HCT116 (cell line): ENCODE measurements at regions of chr14 and their contacts with region 1.

Region 1: DNA sequence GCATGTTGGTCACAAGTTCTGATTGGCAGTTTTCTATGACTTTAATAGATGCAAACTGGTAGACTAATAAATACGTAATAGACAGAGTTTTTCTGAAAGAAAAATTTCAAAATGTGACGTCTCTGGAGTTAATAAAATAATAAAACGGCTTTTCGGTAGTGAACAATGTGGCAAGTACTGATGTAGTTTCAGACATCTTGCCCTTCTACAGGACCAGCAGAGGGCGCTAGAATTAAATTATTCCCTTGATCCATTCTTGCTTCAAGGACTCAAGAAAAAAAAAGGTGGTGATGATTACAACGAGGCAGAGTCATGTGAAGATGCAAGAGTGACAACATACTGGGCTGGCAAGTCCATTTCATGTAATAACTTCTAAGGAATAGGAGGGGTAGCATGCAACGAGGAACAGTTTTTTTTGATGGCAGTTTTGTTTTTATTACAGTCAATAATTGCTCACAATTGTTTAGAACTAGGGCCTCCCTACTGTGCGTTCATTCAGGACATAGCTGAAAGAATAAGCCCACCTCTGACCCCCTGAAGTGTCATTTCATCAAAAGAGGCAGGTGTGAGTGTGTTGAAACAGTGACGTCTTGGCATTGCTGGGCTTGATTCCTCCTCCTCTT is 101.0 kb upstream of the GZMB start:
- DNase-seq: peak; percentile 39
- ATAC-seq: 0 out of 2 replicates have a peak, but pooled peaks have one; percentile 38
- H3K4me3 ChIP-seq: no peak overlapping the region
- H3K27ac ChIP-seq: no peak overlapping the region
- H3K4me1 ChIP-seq: no peaks in the 10 kb centered on the region
- H3K27me3 ChIP-seq: no peaks in the 10 kb centered on the region
- CTCF ChIP-seq: peak; percentile 20 to 77 (median 50); a peak in 5 of 6 replicates
- POLR2A ChIP-seq: no peak
- RAD21 ChIP-seq: peak; percentile 34; the same call in 1 of the 2 replicates

Region 2: DNA sequence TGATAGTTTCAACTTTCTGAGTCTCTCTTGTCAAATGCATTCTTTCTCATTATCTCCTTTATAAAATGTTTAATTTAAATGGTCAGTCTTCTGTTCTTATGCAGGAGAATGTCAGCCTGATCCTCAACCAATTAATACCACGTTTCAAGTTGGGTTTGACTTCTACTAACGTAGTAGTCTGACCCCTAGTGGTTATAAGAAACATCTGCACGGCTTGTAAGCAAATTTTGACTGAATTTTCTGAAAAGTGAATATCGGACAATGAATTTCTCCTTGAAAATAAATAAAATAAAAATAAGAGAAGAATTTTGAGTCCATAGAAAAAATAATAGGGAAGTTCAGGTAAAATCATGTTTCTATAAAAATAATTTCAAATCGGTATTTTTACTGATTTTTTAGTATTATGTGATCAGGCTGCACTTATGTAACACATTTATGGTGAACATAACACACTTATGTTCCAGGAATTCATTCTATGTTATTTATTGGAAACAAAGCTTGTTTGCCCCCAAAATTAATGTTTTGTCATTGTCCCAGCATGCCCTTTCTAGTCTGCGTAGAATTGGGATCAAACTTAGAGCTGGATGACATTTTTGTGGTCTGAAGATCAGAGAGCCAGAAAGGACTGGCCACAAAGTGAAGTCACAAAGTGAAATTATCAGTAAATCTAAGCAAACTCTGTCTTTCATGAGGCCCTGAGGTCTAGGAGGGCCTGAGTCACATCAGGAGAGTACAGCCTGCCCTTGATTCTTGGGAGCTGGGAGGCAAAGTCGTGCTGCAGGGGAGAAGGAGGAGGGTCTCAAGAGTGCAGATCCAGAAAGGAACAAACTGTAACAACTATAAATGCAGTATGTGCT is 416.2 kb after region 1 on chr14:
- CTCF ChIA-PET with region 1: no interaction called
- POLR2A ChIA-PET with region 1: no interaction called
- RAD21 ChIA-PET with region 1: no interaction called
- intact Hi-C with region 1: loop called (anchors 1 kb)
- DNase-seq: peak; percentile 6
- ATAC-seq: no peak
- H3K4me3 ChIP-seq: no peak overlapping the region
- H3K27ac ChIP-seq: no peak overlapping the region
- H3K4me1 ChIP-seq: no peaks in the 10 kb centered on the region
- H3K27me3 ChIP-seq: no peaks in the 10 kb centered on the region
- CTCF ChIP-seq: peak; percentile 11 to 66 (median 61); a peak in 4 of 6 replicates
- POLR2A ChIP-seq: no peak
- RAD21 ChIP-seq: peak; percentile 21; the same call in 1 of the 2 replicates